Activated CD4-positive, alpha-beta memory T cell treated with anti-CD3 and anti-CD28 coated beads for 36 hours (primary cell): ENCODE measurements at regions of chr7 and their contacts with region 1.

Region 1: DNA sequence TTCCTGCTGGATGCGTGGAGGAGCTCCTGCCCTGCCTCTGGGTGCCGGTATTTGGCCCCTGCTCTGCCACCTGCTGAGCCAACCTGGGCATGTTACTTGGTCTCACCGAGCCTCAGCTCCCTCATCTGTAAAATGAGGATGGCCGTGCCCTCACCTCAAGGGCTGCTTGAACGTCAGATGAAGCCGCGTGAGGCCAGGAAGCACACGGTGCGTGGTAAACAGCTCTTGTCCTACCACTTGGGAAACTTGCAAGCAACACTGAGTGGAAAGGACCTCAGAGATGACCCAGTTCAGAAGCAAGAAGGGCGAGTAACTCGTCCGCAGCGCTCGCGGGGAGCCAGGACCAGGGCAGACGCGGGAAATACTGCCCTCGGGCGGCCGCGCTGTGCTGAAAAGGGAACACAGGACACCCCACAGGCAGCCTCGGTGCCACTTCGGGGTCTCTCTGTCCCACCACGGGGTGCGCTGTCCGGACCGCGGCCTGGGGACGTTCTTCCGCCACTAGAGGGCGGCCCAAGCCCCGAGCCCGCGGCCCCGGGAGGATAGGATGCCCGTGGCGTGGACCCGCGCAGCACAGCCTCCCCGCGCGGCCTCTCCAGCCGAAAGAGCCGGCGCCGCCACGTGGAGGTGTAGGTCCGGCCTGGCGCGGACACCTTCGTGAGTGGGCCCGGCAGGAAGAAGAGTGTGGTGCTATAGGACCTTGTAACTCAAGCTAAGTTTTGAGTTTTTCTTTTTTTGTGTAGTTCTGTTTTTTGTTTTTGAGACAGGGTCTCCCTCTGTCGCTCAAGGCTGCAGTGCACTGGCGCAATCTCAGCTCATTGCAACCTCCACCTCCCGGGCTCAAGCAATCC is 94.1 kb downstream of the PRKAG2 start:
- DNase-seq: peak; percentile 80
- H3K4me3 Mint-ChIP-seq: peak overlapping the region; percentile 76
- H3K27ac Mint-ChIP-seq: no peak overlapping the region
- H3K4me1 Mint-ChIP-seq: peaks cover 12% of the 10 kb centered on the region
- H3K27me3 Mint-ChIP-seq: no peaks in the 10 kb centered on the region

Region 2: DNA sequence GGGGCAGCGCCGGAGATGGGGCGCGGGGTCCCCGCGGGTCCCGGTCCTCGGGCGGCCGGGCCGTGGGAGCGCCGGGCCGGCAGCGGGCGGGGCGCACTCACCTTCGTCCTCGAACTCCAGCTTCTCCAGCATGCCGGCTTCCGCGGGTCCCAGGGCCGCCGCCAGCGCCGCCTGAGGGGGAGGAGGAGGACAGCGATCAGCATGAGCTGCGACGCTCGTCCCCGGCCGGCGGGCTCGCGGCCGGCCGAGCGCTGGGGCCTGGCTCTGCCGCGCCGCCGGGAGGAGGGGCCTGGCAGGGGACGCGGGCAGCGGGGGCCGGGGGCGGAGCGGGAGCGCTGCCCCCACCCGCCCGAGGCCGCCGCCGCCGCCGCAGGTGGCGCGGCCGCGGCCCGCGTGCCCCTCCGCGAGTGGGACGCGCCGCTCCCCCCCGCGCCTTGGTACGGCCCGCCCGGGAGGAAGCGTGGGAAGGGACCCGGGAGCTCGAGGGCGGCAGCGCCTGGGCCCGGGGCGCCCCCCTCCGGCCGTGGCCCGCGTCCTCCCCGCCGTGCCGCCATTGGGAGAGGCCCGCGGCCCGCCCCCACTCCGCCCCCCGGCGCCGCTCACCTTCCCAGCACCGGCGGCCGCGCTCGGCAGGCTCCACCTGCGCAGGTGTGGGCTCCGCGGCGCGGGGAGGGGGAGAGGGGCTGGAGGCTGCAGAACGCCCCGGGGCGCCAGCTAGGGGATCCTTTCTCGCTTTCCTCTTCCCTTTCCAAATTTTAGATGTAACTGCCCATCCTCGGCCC is 150.7 kb before region 1 on chr7:
- CTCF ChIA-PET with region 1: interaction called, 21 read pairs
- POLR2A ChIA-PET with region 1: no interaction called
- intact Hi-C with region 1: no loop called
- DNase-seq: peak; percentile 90
- H3K4me3 Mint-ChIP-seq: peak overlapping the region; percentile 95
- H3K27ac Mint-ChIP-seq: peak overlapping the region; percentile 99
- H3K4me1 Mint-ChIP-seq: peaks cover 21% of the 10 kb centered on the region
- H3K27me3 Mint-ChIP-seq: no peaks in the 10 kb centered on the region

Region 3: GRCh38 chr7:151795168-151795811 is 12.5 kb after region 1 on chr7:
- CTCF ChIA-PET with region 1: interaction called, 90 read pairs
- POLR2A ChIA-PET with region 1: interaction called, 5 read pairs
- intact Hi-C with region 1: no loop called
- DNase-seq: peak; percentile 95
- H3K4me3 Mint-ChIP-seq: peak overlapping the region; percentile 51
- H3K27ac Mint-ChIP-seq: peak overlapping the region; percentile 81
- H3K4me1 Mint-ChIP-seq: peaks cover 32% of the 10 kb centered on the region
- H3K27me3 Mint-ChIP-seq: no peaks in the 10 kb centered on the region

Region 4: DNA sequence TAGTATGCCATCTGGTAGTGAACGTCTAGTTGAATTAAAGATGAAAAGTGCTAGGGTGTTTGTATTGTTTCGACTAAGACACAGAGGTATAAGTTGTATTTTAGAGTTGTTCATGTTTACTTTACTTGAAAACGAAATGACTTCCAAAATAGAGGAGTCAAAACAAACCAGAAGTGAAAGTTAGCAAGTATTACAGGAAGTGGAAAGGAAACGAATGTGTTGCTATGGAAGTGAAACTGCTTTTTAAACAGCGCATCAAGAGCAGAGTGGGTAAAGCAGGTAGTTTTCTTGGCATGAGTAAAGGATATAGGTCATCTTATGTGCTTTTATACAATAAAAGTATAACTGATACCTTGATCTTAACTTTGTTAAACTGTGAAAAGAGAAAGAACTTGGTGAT is 153.4 kb after region 1 on chr7:
- CTCF ChIA-PET with region 1: interaction called, 17 read pairs
- POLR2A ChIA-PET with region 1: no interaction called
- intact Hi-C with region 1: loop called (anchors 2 kb)
- DNase-seq: no peak
- H3K4me3 Mint-ChIP-seq: peak overlapping the region; percentile 31
- H3K27ac Mint-ChIP-seq: peak overlapping the region; percentile 52
- H3K4me1 Mint-ChIP-seq: peaks cover 17% of the 10 kb centered on the region
- H3K27me3 Mint-ChIP-seq: peaks cover 2% of the 10 kb centered on the region